ENCODE measurements at regions of chr3 and their contacts with region 1.

Region 1: GRCh38 chr3:45043728-45044299 is 17.7 kb downstream of the CLEC3B start:
- DNase-seq: no peak
- ATAC-seq: peak; percentile 39
- H3K4me3 ChIP-seq: no peak overlapping the region
- H3K27ac ChIP-seq: peak overlapping the region; percentile 22 to 63
- H3K4me1 ChIP-seq: peaks cover 0 to 40% of the 10 kb centered on the region in 2 donors
- H3K27me3 ChIP-seq: no peaks in the 10 kb centered on the region
- CTCF ChIP-seq: no peak

Region 2: GRCh38 chr3:45167011-45167911 is 123.4 kb after region 1 on chr3:
- intact Hi-C with region 1: no loop called
- DNase-seq: peak in 3 of 4 donors; percentile 80 to 95 (median 91)
- ATAC-seq: peak; percentile 99
- H3K4me3 ChIP-seq: no peak overlapping the region
- H3K27ac ChIP-seq: peak overlapping the region; percentile 45 to 71
- H3K4me1 ChIP-seq: peaks cover 9 to 16% of the 10 kb centered on the region in 2 donors
- H3K27me3 ChIP-seq: no peaks in the 10 kb centered on the region
- CTCF ChIP-seq: no peak

Region 3: DNA sequence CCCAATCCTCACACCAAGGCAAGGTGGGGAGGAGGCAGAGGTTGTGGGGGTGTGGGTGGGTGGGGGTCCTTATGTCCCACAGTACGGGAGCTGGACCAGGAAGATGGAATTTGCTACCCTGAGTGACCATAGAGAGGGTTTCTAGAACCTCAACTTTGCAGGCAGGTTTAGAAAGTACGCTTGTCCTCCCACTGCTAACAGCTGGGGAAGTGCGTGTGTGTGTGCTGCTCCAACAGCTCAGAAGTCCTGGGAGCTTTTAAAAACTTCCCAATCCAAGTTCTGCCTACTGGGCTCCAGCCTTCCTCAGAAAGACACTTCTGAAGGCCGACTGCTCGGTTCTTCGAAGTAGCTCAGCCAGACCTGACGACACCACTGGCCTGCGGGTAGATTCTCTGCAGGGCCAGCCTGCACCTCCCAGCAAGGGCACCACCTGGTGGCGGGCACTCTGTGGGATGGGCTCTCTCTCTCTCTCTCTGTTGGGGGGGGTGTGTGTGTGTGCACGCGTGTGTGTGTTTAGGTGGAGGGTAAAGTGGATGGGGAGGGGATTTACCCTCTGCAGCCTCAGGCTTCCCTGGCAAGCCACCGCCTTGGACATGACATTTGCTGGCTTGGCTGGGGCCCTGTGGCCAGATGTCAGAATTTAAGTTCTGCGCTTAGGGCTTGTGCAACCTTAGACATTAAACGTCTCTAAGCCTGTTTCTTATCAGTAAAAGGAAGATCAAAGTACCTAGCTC is 166.7 kb after region 1 on chr3:
- intact Hi-C with region 1: loop called in 1 of 2 experiments (anchors 5 kb)
- DNase-seq: peak; percentile 34 to 96 (median 80)
- ATAC-seq: peak; percentile 100
- H3K4me3 ChIP-seq: no peak overlapping the region
- H3K27ac ChIP-seq: no peak overlapping the region
- H3K4me1 ChIP-seq: peaks cover 0 to 14% of the 10 kb centered on the region in 2 donors
- H3K27me3 ChIP-seq: peaks cover 0 to 10% of the 10 kb centered on the region in 2 donors
- CTCF ChIP-seq: peak; percentile 58 to 73

Measured in left lung (tissue), 14 donors.